Endothelial cell of umbilical vein (primary cell): ENCODE measurements at regions of chr14 and their contacts with region 1.

Region 1: GRCh38 chr14:31360919-31361662 is 59.3 kb downstream of the HEATR5A start:
- DNase-seq: peak; percentile 22
- H3K4me3 ChIP-seq: no peak overlapping the region
- H3K27ac ChIP-seq: peak overlapping the region; percentile 68
- H3K4me1 ChIP-seq: peaks cover 28% of the 10 kb centered on the region
- H3K27me3 ChIP-seq: no peaks in the 10 kb centered on the region
- CTCF ChIP-seq: no peak
- POLR2A ChIP-seq: no peak

Region 2: DNA sequence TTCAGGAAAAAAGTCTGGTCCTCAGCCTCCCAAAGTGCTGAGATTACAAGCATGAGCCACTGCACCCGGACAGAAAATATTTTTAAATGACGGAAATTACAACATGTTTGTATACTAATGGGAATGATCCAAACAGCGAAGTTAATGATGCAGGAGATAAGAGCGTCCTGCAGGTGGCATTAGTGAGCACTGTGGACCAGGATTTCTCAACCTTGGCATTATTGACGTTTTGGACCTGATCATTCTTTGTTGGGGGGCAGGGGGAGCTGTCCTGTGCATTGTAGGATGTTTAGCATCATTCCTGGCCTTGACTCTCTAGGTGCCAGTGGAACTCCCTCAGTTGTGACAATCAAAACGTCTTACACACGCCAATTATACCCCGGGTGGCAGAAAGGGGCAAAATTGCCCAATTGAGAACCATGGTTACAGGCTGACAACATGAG is 704.9 kb before region 1 on chr14:
- CTCF ChIA-PET with region 1: interaction called, 3 read pairs
- POLR2A ChIA-PET with region 1: no interaction called
- dilution Hi-C with region 1: no loop called
- intact Hi-C with region 1: loop called (anchors 10 kb)
- DNase-seq: peak; percentile 35
- H3K4me3 ChIP-seq: no peak overlapping the region
- H3K27ac ChIP-seq: no peak overlapping the region
- H3K4me1 ChIP-seq: no peaks in the 10 kb centered on the region
- H3K27me3 ChIP-seq: no peaks in the 10 kb centered on the region
- CTCF ChIP-seq: peak; percentile 62 to 63
- POLR2A ChIP-seq: no peak

Region 3: GRCh38 chr14:30982533-30982932 is 378.6 kb before region 1 on chr14:
- CTCF ChIA-PET with region 1: interaction called, 3 read pairs
- POLR2A ChIA-PET with region 1: no interaction called
- dilution Hi-C with region 1: no loop called
- intact Hi-C with region 1: loop called (anchors 1 kb)
- DNase-seq: no peak
- H3K4me3 ChIP-seq: no peak overlapping the region
- H3K27ac ChIP-seq: no peak overlapping the region
- H3K4me1 ChIP-seq: no peaks in the 10 kb centered on the region
- H3K27me3 ChIP-seq: no peaks in the 10 kb centered on the region
- CTCF ChIP-seq: no peak
- POLR2A ChIP-seq: no peak

Region 4: DNA sequence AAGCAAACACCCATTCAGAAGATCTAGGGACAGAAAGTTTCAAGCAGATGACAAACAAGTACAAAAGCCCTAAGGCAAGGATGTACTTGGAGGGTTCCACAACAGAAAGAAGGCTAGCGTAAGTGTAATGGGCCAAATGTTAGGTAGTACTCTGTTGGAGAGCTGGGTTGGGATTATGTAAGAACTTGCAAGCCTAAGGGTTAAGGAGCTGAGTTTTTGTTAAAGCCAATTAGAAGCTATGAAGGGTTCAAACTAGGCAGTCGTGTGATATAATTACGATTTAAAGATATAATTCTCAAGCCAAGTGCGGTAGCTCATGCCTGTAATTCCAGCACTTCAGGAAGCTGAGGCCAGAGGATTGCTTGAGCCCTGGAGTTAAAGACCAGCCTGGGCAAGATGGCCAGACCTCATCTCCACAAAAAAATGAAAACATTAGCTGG is 194.8 kb before region 1 on chr14:
- CTCF ChIA-PET with region 1: interaction called, 5 read pairs
- POLR2A ChIA-PET with region 1: no interaction called
- dilution Hi-C with region 1: no loop called
- intact Hi-C with region 1: loop called (anchors 5 kb)
- DNase-seq: no peak
- H3K4me3 ChIP-seq: no peak overlapping the region
- H3K27ac ChIP-seq: no peak overlapping the region
- H3K4me1 ChIP-seq: peaks cover 7% of the 10 kb centered on the region
- H3K27me3 ChIP-seq: no peaks in the 10 kb centered on the region
- CTCF ChIP-seq: no peak
- POLR2A ChIP-seq: no peak

Region 5: GRCh38 chr14:31371646-31372045 is 10.6 kb after region 1 on chr14:
- CTCF ChIA-PET with region 1: interaction called, 12 read pairs
- POLR2A ChIA-PET with region 1: no interaction called
- dilution Hi-C with region 1: no loop called
- intact Hi-C with region 1: no loop called
- DNase-seq: no peak
- H3K4me3 ChIP-seq: no peak overlapping the region
- H3K27ac ChIP-seq: no peak overlapping the region
- H3K4me1 ChIP-seq: no peaks in the 10 kb centered on the region
- H3K27me3 ChIP-seq: no peaks in the 10 kb centered on the region
- CTCF ChIP-seq: no peak
- POLR2A ChIP-seq: no peak